ENCODE measurements at regions of chr14 and their contacts with region 1.

Region 1: DNA sequence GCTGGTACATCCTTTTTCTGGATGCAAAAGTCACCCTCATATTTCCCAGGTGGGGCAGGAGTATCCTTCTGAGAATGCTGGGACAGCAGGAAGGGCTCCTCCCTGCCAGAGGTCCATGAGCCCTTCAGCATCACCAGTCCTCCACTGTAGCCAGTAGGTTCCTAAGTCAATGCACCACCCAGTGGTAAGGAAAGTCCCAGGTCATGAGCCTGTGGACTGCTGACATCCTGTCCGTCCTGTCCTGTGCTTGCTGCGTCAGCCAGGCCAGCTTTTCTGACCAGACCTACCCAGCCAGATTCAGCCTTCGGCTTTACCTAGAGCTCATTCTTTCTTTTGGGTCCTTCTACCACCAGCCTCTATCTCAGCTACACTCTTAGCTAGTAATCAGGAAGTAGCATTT is 23.0 kb upstream of the ACTN1 start:
- DNase-seq: peak in 4 of 5 donors; percentile 46 to 56 (median 52)
- ATAC-seq: peak; percentile 82 to 94 (median 85)
- H3K4me3 ChIP-seq: no peak overlapping the region
- H3K27ac ChIP-seq: no peak overlapping the region
- H3K4me1 ChIP-seq: peaks cover 0 to 11% (median 2%) of the 10 kb centered on the region in 12 donors
- H3K27me3 ChIP-seq: no peaks in the 10 kb centered on the region
- CTCF ChIP-seq: peak; percentile 32 to 66 (median 50)
- POLR2A ChIP-seq: no peak

Region 2: DNA sequence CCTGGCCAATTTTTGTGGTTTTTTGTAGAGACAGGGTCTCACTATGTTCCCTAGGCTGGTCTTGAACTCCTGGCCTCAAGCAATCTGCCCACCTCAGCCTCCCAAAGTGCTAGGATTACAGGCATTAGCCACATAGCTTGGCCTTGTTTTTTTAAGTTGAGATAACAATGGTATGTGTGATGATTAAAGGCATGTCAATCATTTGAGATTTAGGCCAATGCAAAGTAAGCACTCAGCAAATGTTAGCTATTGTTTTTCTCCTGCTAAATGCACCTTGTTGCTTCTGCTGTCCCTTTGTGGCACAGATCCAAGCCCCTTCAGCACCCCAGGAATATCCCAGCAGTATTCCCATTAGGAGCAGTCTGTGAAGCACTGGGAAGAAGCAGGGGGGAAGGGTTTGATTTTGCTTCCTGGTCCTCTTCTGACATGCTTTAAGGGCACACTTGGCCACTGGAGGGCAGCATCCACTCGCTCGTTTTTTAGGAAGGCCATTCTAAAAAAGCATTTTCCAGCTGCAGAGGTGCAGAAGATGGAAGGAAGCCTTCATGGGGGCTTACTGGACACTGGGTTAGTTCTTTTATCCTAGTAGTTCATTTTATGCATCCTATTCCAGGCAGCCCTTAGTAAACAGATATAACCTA is 139.0 kb before region 1 on chr14:
- intact Hi-C with region 1: loop called in 3 of 10 experiments (anchors 5 kb)
- DNase-seq: peak in 4 of 5 donors; percentile 73 to 80 (median 76)
- ATAC-seq: peak; percentile 57 to 84 (median 79)
- H3K4me3 ChIP-seq: no peak overlapping the region
- H3K27ac ChIP-seq: no peak overlapping the region
- H3K4me1 ChIP-seq: no peaks in the 10 kb centered on the region
- H3K27me3 ChIP-seq: no peaks in the 10 kb centered on the region
- CTCF ChIP-seq: peak; percentile 61 to 82 (median 73)
- POLR2A ChIP-seq: no peak

Region 3: DNA sequence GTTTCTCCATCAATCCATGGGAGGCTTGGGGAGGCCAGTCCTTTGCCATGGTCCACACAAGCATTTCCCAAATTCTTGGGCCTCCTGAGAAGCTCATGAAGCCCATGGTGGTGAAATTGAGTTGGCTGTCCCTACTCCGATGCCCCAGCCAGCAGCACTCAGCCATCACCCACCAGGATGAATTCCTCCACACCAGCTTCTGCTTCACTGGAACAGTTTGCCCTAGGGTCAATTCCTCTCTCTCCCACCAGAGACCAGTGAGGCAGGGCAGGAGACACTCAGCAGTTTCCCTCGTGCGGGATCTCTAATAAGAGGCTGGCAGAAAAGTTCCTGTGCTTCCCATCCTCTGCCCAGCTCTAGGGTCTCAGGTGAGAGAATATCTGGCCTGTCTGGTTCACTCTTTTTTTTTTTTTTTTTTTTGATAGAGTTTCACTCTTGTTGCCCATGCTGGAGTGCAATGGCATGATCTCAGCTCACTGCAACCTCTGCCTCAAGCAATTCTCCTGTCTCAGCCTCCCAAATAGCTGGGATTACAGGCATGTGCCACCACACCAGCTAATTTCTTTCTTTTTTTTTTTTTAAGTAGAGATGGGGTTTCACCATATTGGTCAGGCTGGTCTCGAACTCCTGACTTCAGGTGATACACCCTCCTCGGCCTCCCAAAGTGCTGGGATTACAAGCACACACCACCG is 16.5 kb before region 1 on chr14:
- intact Hi-C with region 1: loop called in 1 of 10 experiments (anchors 2 kb)
- DNase-seq: no peak
- ATAC-seq: no peak
- H3K4me3 ChIP-seq: no peak overlapping the region
- H3K27ac ChIP-seq: no peak overlapping the region
- H3K4me1 ChIP-seq: peaks cover 0 to under 1% (median 0%) of the 10 kb centered on the region in 12 donors
- H3K27me3 ChIP-seq: no peaks in the 10 kb centered on the region
- CTCF ChIP-seq: no peak
- POLR2A ChIP-seq: no peak